Motor neuron (in vitro differentiated cells): ENCODE measurements at regions of chr15 and their contacts with region 1.

Region 1: GRCh38 chr15:96330450-96331145 is at the start of gene NR2F2:
- ATAC-seq: peak; percentile 60 to 87 (median 80)
- H3K4me3 ChIP-seq: peak within 1 kb of the TSS; percentile 46 to 92 (median 66)
- H3K27ac ChIP-seq: peak within 1 kb of the TSS; percentile 83 to 91
- H3K4me1 ChIP-seq: peaks cover 19 to 24% of the 10 kb centered on the region in 2 donors
- total RNA-seq, gene NR2F2: 7.5 to 28.9 (median 17.4) TPM

Region 2: GRCh38 chr15:94677202-94677790 is 1653.3 kb before region 1 on chr15:
- in situ Hi-C with region 1: loop called in 2 of 9 experiments (anchors 25 kb)
- ATAC-seq: no peak
- H3K4me3 ChIP-seq: no peak overlapping the region
- H3K27ac ChIP-seq: no peak overlapping the region
- H3K4me1 ChIP-seq: peaks cover 4 to 20% of the 10 kb centered on the region in 2 donors

Region 3: DNA sequence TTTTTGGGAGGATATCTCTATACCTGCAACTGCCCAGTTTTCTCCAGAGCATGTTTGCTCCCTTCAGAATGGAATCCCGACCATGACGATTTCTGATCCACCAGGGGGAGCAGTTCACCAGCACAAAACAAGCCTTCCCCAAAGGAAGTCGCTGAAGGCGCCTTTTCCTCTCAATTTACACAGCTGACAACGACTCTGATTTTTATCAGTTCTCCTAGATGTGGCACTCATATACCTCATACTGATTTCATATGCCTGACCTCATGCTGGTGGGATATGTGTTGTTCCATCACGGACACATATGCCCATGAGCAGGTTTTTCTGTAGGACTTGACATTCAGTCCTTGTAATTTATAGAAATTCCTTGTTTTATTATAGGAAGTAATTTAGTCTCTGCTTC is 1071.1 kb before region 1 on chr15:
- in situ Hi-C with region 1: loop called in 7 of 9 experiments (anchors 25 kb)
- ATAC-seq: peak; percentile 79 to 92 (median 86)
- H3K4me3 ChIP-seq: no peak overlapping the region
- H3K27ac ChIP-seq: no peak overlapping the region
- H3K4me1 ChIP-seq: peaks cover 6 to 10% of the 10 kb centered on the region in 2 donors

Region 4: GRCh38 chr15:95973566-95974256 is 356.9 kb before region 1 on chr15:
- in situ Hi-C with region 1: no loop called
- ATAC-seq: no peak
- H3K4me3 ChIP-seq: no peak overlapping the region
- H3K27ac ChIP-seq: no peak overlapping the region
- H3K4me1 ChIP-seq: peaks cover 0 to 8% of the 10 kb centered on the region in 2 donors

Region 5: DNA sequence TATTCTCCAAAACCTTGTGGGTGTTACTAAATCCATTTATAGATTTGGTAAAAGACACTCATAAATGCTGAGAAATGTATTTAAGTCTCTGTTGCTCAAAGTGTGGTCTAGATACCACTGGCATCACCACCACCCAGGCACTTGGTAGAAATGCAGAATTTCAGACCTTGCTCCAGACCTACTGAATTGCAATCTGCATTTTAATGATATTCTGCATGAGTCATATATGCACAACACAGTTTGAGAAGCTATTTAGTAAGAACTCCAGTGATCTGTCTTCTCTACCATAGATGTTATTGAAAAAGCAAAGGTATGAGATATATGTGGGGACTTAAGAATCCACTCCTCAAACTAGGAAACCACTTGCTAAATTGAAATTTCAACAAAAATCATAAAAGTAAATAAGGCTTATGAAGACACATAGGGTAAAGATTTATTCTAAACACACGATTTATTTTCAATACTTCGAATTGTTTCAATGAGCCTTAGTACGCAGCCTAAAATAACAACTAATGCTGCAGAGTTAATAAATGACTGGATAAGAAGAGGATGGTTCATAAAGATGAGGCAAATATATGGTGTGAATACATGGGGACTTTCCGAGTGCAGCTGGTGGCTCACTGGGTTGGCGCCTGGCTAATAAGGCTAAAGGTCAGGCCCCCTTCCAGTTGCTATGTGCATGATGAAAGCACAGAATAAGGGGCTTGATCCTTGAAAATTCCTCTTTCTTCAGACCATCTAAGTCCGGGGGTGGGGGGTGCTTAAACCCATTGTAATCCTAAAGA is 813.2 kb after region 1 on chr15:
- in situ Hi-C with region 1: no loop called
- ATAC-seq: peak in 4 of 8 experiments; percentile 53 to 94 (median 82)
- H3K4me3 ChIP-seq: no peak overlapping the region
- H3K27ac ChIP-seq: no peak overlapping the region
- H3K4me1 ChIP-seq: peaks cover 13 to 21% of the 10 kb centered on the region in 2 donors